Activated T-helper 1 cell treated with anti-CD3 and anti-CD28 coated beads, Interleukin-12 subunit alpha, Interleukin-12 subunit beta, Interleukin-2, Interleukin-4 antibody, amounts not matched to agents 30 ng/mL and 10 ng/mL and 1 ng/mL, durations not matched to agents 14 hours and 24 hours and 36 hours (primary cell): ENCODE measurements at regions of chr19 and their contacts with region 1.

Region 1: DNA sequence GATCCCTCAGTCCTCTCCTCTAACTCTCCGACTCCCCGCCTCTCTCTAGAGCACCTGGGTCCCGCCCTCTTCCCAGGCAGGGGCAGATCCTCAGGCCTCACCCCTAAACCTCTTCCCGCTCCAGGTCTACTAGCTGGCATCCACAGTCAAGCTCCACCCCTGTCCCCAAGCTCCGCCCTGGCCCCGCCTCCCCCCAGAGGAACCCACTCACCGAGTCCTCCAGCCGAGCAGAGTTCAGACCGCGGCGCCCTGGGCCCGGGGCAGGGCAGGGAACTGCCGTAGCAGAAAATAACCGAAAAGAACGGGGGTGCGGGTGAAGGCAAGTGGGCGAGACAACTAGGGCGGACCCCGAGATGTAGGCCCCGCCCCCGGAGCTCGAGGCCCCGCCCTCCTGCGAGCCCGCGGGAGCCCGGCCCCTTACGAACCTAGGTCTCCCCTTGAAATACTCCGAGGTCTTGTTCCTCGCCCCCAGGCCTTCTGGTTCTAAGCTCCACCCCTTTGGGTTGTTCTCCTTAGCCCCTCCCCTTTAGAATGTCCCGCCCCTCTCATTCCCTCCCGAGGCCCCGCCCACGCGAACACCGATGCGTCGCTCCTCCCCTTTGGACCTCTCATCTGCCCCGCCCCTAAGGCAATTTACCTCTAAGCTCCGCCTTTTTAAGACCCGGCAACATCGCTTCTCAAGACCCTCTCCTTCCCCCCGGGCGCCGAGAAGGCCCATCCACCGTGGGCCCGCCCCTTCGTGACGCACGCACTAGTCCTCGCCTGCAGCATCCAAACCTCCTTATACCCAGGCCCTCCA is at the start of gene GGN:
- DNase-seq: peak; percentile 73
- H3K4me3 Mint-ChIP-seq: peak within 1 kb of the TSS; percentile 89
- H3K27ac Mint-ChIP-seq: peak within 1 kb of the TSS; percentile 91
- H3K4me1 Mint-ChIP-seq: peaks cover 16% of the 10 kb centered on the region
- H3K27me3 Mint-ChIP-seq: peaks cover 21% of the 10 kb centered on the region
- total RNA-seq, gene GGN: 0.17 and 0.39 TPM in 2 replicates

Region 2: DNA sequence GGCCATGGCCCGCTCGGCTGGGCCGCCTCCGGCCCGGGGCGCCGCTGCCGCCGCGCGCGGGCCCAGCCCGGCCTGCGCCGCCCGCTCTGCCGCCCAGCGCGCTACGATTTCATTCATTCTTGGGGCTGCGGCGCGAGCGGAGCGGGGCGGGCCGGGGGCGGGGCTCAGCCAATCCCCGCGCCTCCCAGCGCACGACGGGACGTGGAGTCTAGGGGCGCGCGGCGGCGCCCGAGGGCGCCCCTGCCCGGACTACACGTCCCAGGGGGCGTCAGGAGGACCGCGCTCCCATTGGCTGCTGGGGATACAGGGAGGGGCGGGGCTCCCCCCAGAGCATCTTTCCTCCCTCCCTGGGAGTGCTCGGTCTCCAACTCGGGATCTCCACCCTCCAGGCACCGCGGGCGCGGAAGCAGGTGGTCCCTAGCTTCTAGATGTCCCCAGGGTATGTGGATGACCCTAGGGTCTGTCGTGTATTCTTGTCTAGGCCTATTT is 158.1 kb before region 1 on chr19:
- intact Hi-C with region 1: loop called (anchors 1 kb)
- DNase-seq: peak; percentile 68
- H3K4me3 Mint-ChIP-seq: no peak overlapping the region
- H3K27ac Mint-ChIP-seq: no peak overlapping the region
- H3K4me1 Mint-ChIP-seq: peaks cover 20% of the 10 kb centered on the region
- H3K27me3 Mint-ChIP-seq: peaks cover 51% of the 10 kb centered on the region

Region 3: GRCh38 chr19:38361633-38362075 is 26.1 kb before region 1 on chr19:
- intact Hi-C with region 1: loop called (anchors 1 kb)
- DNase-seq: peak; percentile 69
- H3K4me3 Mint-ChIP-seq: peak overlapping the region; percentile 90
- H3K27ac Mint-ChIP-seq: peak overlapping the region; percentile 61
- H3K4me1 Mint-ChIP-seq: peaks cover 22% of the 10 kb centered on the region
- H3K27me3 Mint-ChIP-seq: peaks cover 30% of the 10 kb centered on the region

Region 4: GRCh38 chr19:38425810-38426466 is 38.2 kb after region 1 on chr19 and contains the start of gene RASGRP4:
- intact Hi-C with region 1: no loop called
- DNase-seq: no peak
- H3K4me3 Mint-ChIP-seq: peak within 1 kb of the TSS; percentile 51
- H3K27ac Mint-ChIP-seq: peak within 1 kb of the TSS; percentile 90
- H3K4me1 Mint-ChIP-seq: peaks cover 32% of the 10 kb centered on the region
- H3K27me3 Mint-ChIP-seq: peaks cover 2% of the 10 kb centered on the region
- total RNA-seq, gene RASGRP4: 1.5 and 1.8 TPM in 2 replicates

Region 5: DNA sequence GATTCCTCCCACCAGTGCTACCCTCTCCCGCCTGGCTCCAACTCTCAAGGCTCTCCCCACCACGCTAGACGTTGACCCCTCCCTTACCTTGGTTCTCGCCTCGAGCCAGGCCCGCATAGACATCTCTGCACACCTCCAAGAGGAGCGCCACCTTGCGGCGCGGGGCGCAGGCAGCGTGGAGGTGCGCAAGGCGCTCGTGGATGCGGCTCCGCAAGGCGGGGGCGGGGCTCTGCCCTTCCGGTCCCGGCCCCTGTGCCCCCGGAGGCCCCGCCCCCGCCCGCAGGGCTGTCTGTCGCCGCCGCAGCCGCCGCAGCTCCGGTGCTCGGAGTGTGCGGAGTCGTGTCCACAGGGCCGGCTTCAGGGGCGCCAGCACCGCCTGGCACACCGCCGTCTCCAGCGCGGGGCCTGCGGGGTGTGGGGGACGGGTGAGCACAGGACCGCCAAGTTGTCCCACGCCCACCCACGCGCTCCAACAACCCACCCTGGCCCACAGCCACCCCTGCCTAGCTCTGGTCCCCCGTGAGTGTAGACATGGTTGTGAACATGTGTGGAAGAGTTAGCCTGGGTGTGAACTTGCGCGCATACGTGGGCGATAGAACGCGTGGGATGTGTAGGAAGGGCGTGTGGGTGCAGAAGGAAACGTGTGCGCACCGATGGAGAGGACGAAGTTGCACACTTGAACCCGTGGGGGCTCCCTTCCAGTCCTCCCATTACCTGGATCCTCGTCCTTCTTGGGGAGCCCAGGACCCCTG is 482.3 kb after region 1 on chr19:
- intact Hi-C with region 1: no loop called
- DNase-seq: peak; percentile 92
- H3K4me3 Mint-ChIP-seq: peak overlapping the region; percentile 86
- H3K27ac Mint-ChIP-seq: peak overlapping the region; percentile 87
- H3K4me1 Mint-ChIP-seq: peaks cover 42% of the 10 kb centered on the region
- H3K27me3 Mint-ChIP-seq: no peaks in the 10 kb centered on the region